Body of pancreas (tissue), 4 donors: ENCODE measurements at regions of chr5 and their contacts with region 1.

Region 1: DNA sequence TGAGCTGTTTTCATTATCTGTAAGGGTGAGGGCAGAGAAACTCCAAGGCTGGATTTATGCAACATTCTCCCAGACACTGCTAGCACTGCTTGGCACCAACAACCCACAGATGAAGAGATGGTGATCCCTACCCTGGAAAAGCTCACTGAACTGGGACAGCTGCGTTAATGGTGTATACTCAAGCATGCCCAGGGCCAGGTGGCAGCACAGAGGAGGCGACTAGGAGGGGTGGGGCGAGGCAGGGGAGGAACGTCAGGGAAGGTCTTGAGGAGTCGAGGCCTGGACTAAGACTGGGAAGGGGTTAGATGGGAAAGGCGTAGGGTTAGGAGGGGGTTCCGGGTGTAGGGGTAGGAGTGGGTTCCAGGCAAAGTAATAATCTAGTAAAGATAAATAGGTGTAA is 73.1 kb upstream of the TBC1D9B start:
- DNase-seq: no peak
- ATAC-seq: no peak
- H3K4me3 ChIP-seq: no peak overlapping the region
- H3K27ac ChIP-seq: no peak overlapping the region
- H3K4me1 ChIP-seq: no peaks in the 10 kb centered on the region
- H3K27me3 ChIP-seq: no peaks in the 10 kb centered on the region
- CTCF ChIP-seq: no peak
- POLR2A ChIP-seq: no peak

Region 2: DNA sequence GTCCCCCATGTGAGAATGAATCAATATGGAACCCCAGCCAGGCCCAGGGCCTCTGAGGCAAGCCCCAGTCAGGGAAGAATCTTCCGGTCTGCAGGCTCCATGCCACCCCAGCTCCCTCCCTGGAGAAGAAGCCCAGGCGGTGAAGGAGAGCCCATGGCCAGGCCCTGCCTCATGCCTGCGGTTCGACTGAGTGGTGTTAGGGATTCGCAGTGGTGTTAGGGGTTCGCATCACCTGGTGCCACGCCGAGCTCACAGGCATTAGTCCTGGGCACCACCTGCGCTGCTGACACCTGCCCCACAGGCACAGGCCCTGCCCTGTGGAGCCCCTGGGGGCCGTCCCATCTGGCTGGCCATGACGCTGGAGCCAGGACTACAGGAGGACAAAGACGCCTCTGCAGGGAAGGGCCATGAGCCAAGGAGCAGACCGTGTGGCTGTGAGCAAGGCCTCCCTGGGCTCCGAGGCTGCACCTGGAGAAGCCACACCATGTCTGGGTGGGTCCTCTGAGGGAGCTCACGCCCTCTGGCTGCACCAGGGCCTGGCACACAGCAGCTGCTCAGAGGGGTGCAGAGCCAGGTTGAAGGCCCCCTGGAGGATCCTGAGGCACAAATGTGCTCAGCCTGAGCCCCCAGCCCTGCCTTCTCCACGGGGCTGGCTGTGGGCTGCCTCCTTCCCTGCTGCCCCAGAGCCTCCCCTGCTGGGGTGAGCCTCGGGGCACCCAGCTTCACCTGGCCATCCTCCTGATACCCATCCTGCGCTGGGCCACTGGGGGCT is 118.4 kb after region 1 on chr5:
- intact Hi-C with region 1: loop called (anchors 5 kb)
- DNase-seq: no peak
- ATAC-seq: no peak
- H3K4me3 ChIP-seq: no peak overlapping the region
- H3K27ac ChIP-seq: no peak overlapping the region
- H3K4me1 ChIP-seq: no peaks in the 10 kb centered on the region
- H3K27me3 ChIP-seq: no peaks in the 10 kb centered on the region
- CTCF ChIP-seq: no peak
- POLR2A ChIP-seq: no peak

Region 3: DNA sequence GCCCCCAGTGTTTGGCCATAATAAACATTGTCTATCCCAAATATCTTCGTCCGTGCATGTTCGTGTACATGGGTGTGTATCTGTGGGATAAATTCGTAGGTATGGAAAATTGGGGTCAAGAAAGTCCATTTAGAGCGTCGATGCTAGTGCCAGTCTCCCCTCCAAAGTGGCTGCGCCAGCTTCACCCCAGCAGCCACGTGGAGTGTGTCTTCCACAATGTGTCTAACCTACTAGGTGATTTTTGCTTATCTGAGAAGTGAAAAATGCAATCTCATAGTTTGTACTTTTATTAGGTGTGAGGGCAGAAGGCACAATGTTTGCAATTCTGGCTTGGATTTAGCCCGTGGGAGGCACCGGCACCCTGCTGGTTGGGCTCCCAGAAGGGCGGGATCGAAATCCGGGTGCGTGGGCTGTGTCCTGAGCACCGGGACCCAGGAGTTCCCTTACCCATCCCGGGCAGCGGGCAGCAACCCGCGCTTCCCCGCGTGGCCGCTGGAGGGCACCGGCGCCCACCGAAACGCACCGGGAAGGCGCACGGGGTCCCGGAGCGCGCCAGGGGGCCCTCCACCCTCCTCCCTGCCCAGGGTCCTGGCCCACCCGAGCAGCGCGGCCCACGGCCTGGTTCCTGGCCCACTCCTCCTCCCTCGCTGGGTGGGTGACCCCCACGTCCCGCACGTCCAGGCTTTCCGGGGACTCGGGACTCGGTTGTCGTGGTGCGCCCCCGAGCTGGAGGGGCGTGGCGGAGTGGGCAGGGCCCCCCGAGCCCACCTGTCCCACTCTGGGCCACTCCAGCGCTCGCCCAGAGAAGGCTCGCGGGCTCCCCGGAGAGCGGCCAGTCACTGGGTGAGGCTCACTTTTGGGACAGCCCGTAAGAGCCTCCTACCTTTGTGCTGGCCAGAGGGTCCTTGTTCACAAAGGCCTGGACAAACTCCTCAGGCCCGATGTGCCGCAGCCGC is 146.2 kb after region 1 on chr5:
- intact Hi-C with region 1: no loop called
- DNase-seq: peak in 1 of 4 donors; percentile 40
- ATAC-seq: peak; percentile 47
- H3K4me3 ChIP-seq: no peak overlapping the region
- H3K27ac ChIP-seq: no peak overlapping the region
- H3K4me1 ChIP-seq: peaks cover 6% of the 10 kb centered on the region
- H3K27me3 ChIP-seq: peaks cover 0 to 10% of the 10 kb centered on the region in 2 donors
- CTCF ChIP-seq: peak; percentile 59 to 77 (median 62)
- POLR2A ChIP-seq: no peak